HCT116 (cell line): ENCODE measurements at regions of chrX and their contacts with region 1.

Region 1: DNA sequence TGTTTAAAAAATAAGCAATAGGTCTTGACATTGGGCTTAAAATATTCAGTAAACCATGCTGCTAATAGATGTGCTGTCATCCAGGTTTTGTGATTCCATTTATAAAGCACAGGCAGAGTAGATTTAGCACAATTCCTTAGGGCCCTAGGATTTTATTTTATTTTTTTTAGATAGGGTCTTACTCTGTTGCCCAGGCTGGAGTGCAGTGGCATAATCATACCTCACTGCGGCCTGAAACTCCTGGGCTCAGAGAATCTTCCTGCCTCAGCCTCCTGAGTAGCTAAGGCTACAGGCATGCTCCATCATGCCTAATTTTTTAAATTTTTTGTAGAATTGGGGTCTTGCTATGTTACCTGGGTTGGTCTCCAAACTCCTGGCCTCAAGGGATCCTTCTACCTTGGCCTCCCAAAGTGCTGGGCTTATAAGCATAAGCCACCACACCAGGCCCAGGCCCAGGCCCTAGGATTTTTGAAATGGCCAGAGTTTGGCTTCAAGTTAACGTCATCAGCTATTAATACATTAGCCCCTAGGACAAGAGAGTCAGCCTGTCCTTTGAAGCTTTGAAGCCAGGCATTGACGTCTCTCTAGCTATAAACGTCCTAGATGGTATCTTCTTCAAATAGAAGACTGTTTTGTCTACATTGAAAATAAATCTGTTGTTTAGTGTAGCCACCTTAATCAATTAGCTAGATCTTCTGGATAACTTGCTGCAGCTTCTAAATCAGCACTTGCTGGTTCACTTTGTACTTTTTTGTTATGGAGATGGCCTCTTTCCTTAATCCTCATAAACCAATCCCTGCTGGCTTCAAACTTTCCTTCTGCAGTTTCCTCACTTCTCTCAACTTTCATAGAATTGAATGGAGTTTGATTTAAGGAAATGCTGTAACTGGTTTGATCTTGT is 35.8 kb downstream of the EIF2S3 start:
- DNase-seq: no peak
- ATAC-seq: no peak
- H3K4me3 ChIP-seq: no peak overlapping the region
- H3K27ac ChIP-seq: no peak overlapping the region
- H3K4me1 ChIP-seq: no peaks in the 10 kb centered on the region; a peak in 1 of 4 replicates
- H3K27me3 ChIP-seq: no peaks in the 10 kb centered on the region
- CTCF ChIP-seq: no peak
- POLR2A ChIP-seq: no peak
- RAD21 ChIP-seq: no peak

Region 2: DNA sequence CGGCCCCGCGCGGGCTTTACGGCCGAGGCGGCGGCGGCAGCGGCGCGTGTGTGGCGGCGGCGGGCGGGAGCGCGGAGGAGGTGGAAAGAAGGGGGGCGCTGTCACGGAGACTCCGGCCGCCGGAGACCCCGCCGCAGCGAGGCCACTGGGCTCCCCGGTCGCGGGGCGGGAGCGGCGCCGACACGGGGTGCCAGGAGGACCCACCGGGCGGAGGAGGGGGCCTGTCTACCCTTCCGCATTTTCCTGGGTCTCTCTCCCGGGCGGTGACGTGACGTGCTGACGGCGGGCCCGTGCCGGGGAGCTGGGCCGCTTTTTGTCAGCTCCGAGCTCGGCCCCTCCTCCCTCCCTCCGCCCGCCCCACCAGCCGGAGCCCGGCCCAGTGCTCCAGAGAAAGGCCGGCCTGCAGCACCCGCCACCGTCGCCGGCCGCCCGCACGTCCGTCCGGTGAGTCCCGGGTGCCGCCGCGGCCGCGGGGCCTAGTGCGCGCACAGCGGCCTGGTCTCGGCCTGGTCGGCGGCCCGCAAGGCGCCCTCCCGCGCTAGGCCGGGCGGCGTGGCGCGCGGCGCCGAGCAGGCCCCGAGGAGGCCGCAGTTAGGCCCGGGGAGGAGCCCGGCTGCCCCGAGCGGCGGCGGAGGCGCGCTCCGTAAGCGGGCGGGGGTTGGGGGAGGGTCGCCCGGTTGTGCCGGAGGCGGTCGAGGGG is 59.0 kb after region 1 on chrX and contains the start of gene ZFX:
- CTCF ChIA-PET with region 1: no interaction called
- POLR2A ChIA-PET with region 1: no interaction called
- RAD21 ChIA-PET with region 1: no interaction called
- intact Hi-C with region 1: loop called (anchors 5 kb)
- DNase-seq: no peak
- ATAC-seq: peak; percentile 71
- H3K4me3 ChIP-seq: peak within 1 kb of the TSS; percentile 67 to 76
- H3K27ac ChIP-seq: peak within 1 kb of the TSS; percentile 98
- H3K4me1 ChIP-seq: peaks cover 32 to 50% of the 10 kb centered on the region in 2 experiments
- H3K27me3 ChIP-seq: no peaks in the 10 kb centered on the region
- CTCF ChIP-seq: no peak
- POLR2A ChIP-seq: no peak
- RAD21 ChIP-seq: no peak
- total RNA-seq, gene ZFX: 28.1 TPM